ENCODE measurements at regions of chr9 and their contacts with region 1.

Region 1: DNA sequence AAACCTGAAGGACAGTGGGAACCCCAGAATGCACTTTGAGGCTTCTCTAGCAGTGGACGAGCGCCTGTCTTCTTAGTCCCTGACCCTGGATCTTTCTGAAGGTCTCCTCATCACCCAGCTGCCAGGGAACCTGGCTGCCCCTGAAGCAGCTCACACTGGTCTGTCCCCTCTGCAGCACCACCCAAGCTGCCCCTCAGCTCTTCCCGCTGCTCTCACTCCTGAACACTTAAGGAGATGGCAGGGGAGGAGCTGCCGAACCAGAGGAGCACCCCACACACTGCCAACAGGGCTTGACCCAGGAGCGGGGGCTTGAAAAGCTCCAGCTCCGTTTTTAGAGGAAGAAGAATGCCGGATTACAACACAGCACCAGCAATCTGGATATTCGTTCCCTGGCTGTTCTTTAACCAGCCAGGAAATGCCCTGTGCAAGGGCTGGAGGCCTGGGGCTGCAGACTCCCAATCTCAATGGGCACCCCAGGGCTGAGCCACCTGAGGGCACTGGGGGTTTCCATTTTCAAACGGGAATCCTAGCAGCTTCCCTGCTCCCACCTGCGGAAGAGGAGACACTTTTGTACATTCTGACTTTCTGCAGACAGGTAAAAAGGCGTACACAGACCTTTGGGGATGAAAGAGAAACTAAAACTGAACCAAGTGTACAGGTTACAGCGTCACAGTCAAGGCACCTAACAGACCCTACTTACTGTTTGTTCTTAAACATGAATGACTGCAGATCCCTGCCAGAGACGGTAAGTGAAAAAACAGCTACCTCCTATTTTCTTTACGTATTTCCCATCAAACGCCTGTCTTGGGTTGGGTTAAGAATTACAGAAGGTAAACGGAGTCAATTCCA is 36.3 kb downstream of the GOLM1 start:
- DNase-seq: no peak
- H3K4me3 ChIP-seq: no peak overlapping the region
- H3K27ac ChIP-seq: no peak overlapping the region
- H3K4me1 ChIP-seq: no peaks in the 10 kb centered on the region
- H3K27me3 ChIP-seq: no peaks in the 10 kb centered on the region
- CTCF ChIP-seq: no peak

Region 2: GRCh38 chr9:85995599-85995998 is 67.5 kb before region 1 on chr9:
- CTCF ChIA-PET with region 1: no interaction called
- dilution Hi-C with region 1: loop called (anchors 5 kb)
- in situ Hi-C with region 1: no loop called
- intact Hi-C with region 1: no loop called
- DNase-seq: no peak
- H3K4me3 ChIP-seq: no peak overlapping the region
- H3K27ac ChIP-seq: no peak overlapping the region
- H3K4me1 ChIP-seq: no peaks in the 10 kb centered on the region
- H3K27me3 ChIP-seq: no peaks in the 10 kb centered on the region
- CTCF ChIP-seq: no peak

Measured in mammary epithelial cell (primary cell).